SK-N-SH (cell line): ENCODE measurements at regions of chr15 and their contacts with region 1.

Region 1: DNA sequence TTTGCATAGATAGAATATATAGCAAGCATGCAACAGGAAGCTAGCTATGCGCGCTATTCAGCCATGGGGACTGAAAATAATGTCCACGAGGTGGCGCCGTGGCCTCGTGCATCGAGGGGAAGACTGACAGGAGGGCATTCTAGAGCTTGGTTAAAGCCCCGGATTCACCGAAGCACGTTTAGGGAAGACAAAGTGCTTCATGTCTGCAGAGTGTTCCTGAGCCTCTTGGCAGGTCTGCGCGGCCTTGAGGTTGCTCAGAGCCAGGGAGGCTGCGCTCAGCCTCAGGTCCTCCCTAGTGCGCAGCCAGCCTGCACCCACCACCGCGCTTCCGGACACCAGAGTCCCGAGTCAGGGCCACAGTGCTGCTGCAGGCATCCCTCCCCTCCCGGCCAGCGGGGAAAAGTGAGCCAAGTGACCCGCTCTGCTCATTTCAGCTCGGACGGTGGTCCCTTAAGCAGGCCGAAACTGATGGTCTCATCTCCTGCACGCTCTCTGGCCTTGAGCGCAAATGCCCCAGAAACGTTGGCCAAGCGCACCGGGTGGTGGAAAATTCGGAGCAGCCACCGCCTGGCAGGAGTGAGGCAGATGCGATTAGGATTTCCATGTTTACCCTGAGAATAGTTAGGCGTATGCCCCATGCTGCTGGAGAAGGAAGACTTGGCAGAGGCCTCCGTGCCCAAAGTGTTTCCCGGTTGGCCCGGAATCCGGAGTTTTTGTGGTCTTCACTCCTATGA is 24.8 kb downstream of the GABRA5 start:
- DNase-seq: peak; percentile 83
- H3K4me3 ChIP-seq: peak overlapping the region; percentile 31 to 55; a peak in 3 of 4 replicates
- H3K27ac ChIP-seq: no peak overlapping the region
- H3K4me1 ChIP-seq: peaks cover 0 to 5% of the 10 kb centered on the region in 2 experiments; a peak in 2 of 4 replicates
- H3K27me3 ChIP-seq: no peaks in the 10 kb centered on the region
- CTCF ChIP-seq: peak; percentile 71
- EP300 ChIP-seq: no peak
- RAD21 ChIP-seq: peak; percentile 93

Region 2: GRCh38 chr15:26844901-26845300 is 46.7 kb before region 1 on chr15:
- CTCF ChIA-PET with region 1: no interaction called
- POLR2A ChIA-PET with region 1: no interaction called
- DNase-seq: no peak
- H3K4me3 ChIP-seq: no peak overlapping the region
- H3K27ac ChIP-seq: no peak overlapping the region
- H3K4me1 ChIP-seq: no peaks in the 10 kb centered on the region
- H3K27me3 ChIP-seq: no peaks in the 10 kb centered on the region
- CTCF ChIP-seq: no peak
- EP300 ChIP-seq: no peak
- RAD21 ChIP-seq: no peak

Region 3: GRCh38 chr15:26910715-26911114 is 19.1 kb after region 1 on chr15:
- CTCF ChIA-PET with region 1: interaction called, 18 read pairs
- POLR2A ChIA-PET with region 1: no interaction called
- DNase-seq: no peak
- H3K4me3 ChIP-seq: no peak overlapping the region
- H3K27ac ChIP-seq: no peak overlapping the region
- H3K4me1 ChIP-seq: no peaks in the 10 kb centered on the region
- H3K27me3 ChIP-seq: no peaks in the 10 kb centered on the region
- CTCF ChIP-seq: no peak
- EP300 ChIP-seq: no peak
- RAD21 ChIP-seq: no peak

Region 4: GRCh38 chr15:27017168-27017809 is 125.7 kb after region 1 on chr15:
- CTCF ChIA-PET with region 1: interaction called, 107 read pairs
- POLR2A ChIA-PET with region 1: no interaction called
- DNase-seq: peak; percentile 87
- H3K4me3 ChIP-seq: peak overlapping the region in 1 of 2 experiments; percentile 32; a peak in 1 of 4 replicates
- H3K27ac ChIP-seq: no peak overlapping the region
- H3K4me1 ChIP-seq: no peaks in the 10 kb centered on the region
- H3K27me3 ChIP-seq: no peaks in the 10 kb centered on the region
- CTCF ChIP-seq: peak; percentile 70
- EP300 ChIP-seq: no peak
- RAD21 ChIP-seq: peak; percentile 91

Region 5: DNA sequence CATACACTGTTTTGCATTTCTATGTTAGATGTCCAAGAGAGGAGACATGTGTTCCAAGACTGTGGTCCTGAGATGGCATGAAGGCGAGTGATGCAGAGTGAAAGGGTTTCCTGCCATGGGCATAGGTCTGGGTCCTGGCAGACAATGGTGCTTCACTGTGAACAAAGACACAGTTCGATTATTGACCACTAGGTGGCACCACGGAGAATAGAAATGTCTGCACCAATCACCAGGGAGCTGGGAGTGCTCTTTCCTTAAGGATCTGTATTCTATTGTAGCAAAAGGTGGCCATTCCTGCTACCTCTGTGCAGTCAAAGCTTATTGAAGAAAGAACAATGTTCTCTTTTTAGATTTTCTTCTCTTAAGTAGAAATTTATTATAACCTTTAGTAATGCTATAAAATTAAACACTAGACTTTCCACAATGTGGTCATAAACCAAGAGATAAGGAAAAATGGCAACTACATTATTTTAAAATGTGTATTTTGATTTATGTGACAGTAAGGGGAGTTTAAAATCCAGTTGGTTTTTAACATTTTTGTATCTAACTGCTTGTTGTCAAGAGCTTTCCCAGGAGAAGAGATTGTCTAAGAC is 168.1 kb after region 1 on chr15:
- CTCF ChIA-PET with region 1: interaction called, 10 read pairs
- POLR2A ChIA-PET with region 1: no interaction called
- DNase-seq: peak; percentile 79
- H3K4me3 ChIP-seq: no peak overlapping the region; a peak in 1 of 4 replicates
- H3K27ac ChIP-seq: no peak overlapping the region
- H3K4me1 ChIP-seq: peaks cover 0 to 3% of the 10 kb centered on the region in 2 experiments; a peak in 1 of 4 replicates
- H3K27me3 ChIP-seq: no peaks in the 10 kb centered on the region
- CTCF ChIP-seq: peak; percentile 60
- EP300 ChIP-seq: no peak
- RAD21 ChIP-seq: peak; percentile 76

Region 6: DNA sequence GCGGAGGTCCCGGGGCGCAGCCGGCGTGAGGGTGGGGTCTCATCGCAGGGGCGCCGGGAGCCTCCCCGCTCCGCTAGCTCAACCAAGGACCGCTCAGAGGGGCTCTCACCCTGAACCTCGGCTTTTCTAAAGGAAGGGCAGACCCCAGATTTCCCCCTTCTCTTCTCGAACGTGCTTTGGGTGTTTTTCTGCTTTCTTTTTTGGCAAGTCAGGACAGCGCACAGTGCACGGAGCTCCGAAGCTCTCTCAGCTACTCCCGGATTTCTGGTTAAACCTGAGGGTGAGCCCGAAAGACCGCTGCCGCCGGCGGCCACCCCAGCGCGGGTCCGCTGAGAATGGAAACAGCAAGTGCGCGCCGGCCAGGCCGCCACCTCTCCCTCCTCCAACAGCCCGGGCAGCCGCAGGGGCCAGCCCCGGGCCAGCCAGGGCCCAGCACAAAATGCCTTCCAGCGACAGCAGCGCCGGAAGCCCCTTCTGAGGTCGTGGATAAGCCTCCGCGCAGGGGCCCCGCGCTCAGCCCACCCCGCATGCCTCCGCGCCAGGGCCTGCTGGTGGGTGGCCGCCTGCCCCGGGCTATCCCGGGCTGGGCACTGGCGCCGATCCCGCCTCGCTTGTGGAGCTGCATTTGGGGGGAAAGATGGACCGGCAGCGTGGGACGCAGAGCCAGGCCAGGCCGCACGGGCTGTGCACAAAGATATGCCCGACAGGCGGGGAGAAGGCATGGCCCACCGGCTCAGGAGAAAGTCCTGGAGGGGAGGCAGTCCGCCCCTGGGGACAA is 1215.7 kb after region 1 on chr15:
- CTCF ChIA-PET with region 1: interaction called, 13 read pairs
- POLR2A ChIA-PET with region 1: no interaction called
- DNase-seq: no peak
- H3K4me3 ChIP-seq: no peak overlapping the region
- H3K27ac ChIP-seq: no peak overlapping the region
- H3K4me1 ChIP-seq: no peaks in the 10 kb centered on the region; a peak in 1 of 4 replicates
- H3K27me3 ChIP-seq: no peaks in the 10 kb centered on the region
- CTCF ChIP-seq: no peak
- EP300 ChIP-seq: no peak
- RAD21 ChIP-seq: no peak